MCF 10A (cell line): ENCODE measurements at regions of chr11 and their contacts with region 1.

Region 1: DNA sequence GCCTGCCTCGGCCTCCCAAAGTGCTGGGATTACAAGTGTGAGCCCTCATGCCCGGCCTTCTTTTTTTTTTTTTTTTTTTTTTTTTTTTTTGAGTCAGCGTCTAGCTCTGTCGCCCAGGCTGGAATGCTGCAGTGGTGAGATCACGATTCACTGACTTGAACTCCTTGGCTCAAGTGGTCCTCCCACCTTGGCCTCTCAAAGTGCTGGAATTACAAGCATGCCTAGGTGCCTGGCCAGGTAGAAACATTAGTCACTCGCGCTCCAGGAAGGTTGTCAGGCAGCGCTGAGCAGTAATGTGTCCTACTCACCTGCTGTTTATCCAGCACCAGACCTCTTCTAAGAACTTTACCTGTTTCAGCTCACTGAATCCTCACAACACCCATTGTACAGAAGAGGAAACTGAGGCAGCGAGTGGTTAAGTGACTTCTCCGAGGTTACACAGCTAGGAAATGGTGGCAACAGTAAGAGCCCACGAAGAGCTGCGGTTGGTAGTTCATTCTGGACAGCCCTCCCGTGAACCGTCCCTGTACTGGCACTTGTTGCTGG is 496 bp upstream of the CST6 start:
- DNase-seq: peak; percentile 86
- H3K4me3 Mint-ChIP-seq: no peak overlapping the region
- H3K27ac Mint-ChIP-seq: peak overlapping the region; percentile 9
- H3K4me1 Mint-ChIP-seq: peaks cover 20% of the 10 kb centered on the region
- H3K27me3 Mint-ChIP-seq: no peaks in the 10 kb centered on the region
- CTCF ChIP-seq: no peak

Region 2: DNA sequence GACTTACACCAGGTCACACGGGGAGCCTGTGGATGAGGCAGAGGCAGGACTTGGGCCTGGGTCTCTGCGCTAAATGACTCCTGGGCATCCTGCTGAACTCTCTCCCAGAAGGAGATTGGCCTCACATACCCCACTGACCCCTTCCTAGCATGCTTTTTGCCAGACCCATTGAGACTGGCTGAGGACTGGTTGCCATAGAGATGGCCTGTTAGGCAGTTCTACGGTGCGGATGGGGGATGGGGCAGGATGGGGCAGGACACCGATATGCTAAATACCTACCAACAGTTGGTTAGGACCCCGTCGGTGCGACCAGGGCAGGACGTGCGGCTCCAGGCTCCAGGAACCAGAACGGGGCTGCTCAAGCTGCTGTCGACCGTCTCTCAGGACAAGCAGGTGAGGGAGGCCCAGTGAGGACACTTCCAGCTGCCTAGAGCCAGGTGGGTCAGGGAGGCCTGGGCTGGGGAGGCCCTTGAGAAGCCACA is 65.8 kb before region 1 on chr11 and contains the start of gene TSGA10IP:
- CTCF ChIA-PET with region 1: no interaction called
- POLR2A ChIA-PET with region 1: no interaction called
- intact Hi-C with region 1: no loop called
- DNase-seq: no peak
- H3K4me3 Mint-ChIP-seq: no peak within 1 kb of the TSS
- H3K27ac Mint-ChIP-seq: no peak within 1 kb of the TSS
- H3K4me1 Mint-ChIP-seq: peaks cover 9% of the 10 kb centered on the region
- H3K27me3 Mint-ChIP-seq: peaks cover 10% of the 10 kb centered on the region
- CTCF ChIP-seq: no peak
- total RNA-seq, gene TSGA10IP: not detected in 2 replicates

Region 3: DNA sequence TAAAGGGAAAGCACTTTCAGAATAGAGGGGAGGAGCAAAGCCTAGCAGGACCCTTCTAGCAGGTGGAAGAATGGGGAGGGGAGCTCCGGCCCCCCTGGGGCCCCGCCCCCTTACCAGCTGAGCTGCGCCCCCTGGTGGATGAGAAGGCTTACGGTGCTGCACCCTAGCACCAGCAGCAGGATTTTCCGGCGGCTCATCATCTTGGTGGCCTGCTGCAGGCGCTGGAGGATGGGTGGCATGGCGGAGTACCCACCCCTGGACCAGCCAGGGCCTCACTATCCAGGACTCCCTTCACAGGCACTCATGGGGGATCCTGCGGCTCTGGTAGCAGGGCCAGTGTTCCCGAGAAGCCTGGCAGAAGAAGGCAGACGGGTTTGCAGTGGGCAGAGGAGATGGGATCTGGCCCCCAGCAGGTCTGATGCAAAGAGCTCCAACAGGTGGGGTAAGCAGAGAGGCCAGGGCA is 33.9 kb after region 1 on chr11:
- CTCF ChIA-PET with region 1: interaction called, 12 read pairs
- POLR2A ChIA-PET with region 1: interaction called, 3 read pairs
- intact Hi-C with region 1: loop called (anchors 10 kb)
- DNase-seq: peak; percentile 78
- H3K4me3 Mint-ChIP-seq: no peak overlapping the region
- H3K27ac Mint-ChIP-seq: no peak overlapping the region
- H3K4me1 Mint-ChIP-seq: no peaks in the 10 kb centered on the region
- H3K27me3 Mint-ChIP-seq: no peaks in the 10 kb centered on the region
- CTCF ChIP-seq: peak; percentile 86